CD14-positive monocyte (primary cell): ENCODE measurements at regions of chr1 and their contacts with region 1.

Region 1: GRCh38 chr1:167066333-167067122 is 23.6 kb downstream of the GPA33 start:
- DNase-seq: peak; percentile 52 to 71 (median 65)
- H3K4me3 ChIP-seq: peak overlapping the region in 1 of 3 experiments; percentile 12
- H3K4me3 Mint-ChIP-seq: peak overlapping the region; percentile 40 to 80
- H3K27ac ChIP-seq: no peak overlapping the region
- H3K27ac Mint-ChIP-seq: peak overlapping the region in 2 of 7 donors; percentile 5 to 38
- H3K4me1 ChIP-seq: peaks cover 3 to 7% of the 10 kb centered on the region in 2 donors
- H3K4me1 Mint-ChIP-seq: peaks cover 7% of the 10 kb centered on the region
- H3K27me3 ChIP-seq: no peaks in the 10 kb centered on the region
- H3K27me3 Mint-ChIP-seq: peaks cover 0 to 7% (median 3%) of the 10 kb centered on the region in 3 donors
- CTCF ChIP-seq: peak; percentile 98

Region 2: GRCh38 chr1:166895793-166896192 is 170.7 kb before region 1 on chr1:
- intact Hi-C with region 1: no loop called
- DNase-seq: no peak
- H3K4me3 ChIP-seq: no peak overlapping the region
- H3K4me3 Mint-ChIP-seq: no peak overlapping the region
- H3K27ac ChIP-seq: no peak overlapping the region
- H3K27ac Mint-ChIP-seq: no peak overlapping the region
- H3K4me1 ChIP-seq: peaks cover 0 to under 1% of the 10 kb centered on the region in 2 donors
- H3K4me1 Mint-ChIP-seq: no peaks in the 10 kb centered on the region
- H3K27me3 ChIP-seq: no peaks in the 10 kb centered on the region
- H3K27me3 Mint-ChIP-seq: peaks cover 0 to 5% (median 0%) of the 10 kb centered on the region in 3 donors
- CTCF ChIP-seq: no peak

Region 3: DNA sequence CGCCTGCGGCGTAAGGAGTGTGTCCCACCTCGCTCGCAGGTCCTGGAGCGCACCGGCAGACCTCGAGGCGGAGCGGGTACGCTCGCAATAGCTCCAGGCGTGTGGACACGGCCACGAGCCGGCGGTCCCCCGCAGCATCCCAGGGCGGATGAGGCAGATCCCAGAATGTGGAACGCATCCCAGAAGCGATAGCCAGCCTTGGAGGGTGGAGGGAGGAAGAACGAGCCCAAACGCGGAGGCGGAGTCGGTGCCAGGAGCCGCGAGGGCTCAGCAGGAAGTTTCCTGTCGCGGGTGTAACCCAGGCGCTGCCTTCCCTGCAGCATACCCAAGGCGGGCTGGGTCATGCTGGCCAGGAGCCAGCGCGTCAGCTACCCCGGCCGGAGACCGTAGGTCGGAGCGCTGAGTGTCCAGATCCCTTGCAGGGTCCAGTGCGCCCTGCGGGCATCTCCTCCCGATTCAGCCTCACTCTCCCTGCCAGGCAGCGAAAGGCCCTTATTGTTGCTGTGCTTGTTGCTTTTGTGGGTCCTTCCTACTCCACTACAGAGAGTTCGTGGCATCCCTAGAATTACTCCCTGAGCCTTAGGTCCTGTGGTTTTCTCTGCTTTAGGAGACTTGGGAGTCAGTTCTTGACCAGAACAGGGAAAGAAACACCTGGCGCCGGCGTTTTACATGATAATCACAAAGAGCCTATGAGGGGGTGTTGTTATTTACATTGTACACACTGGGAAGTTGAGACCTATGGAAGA is 55.0 kb after region 1 on chr1:
- intact Hi-C with region 1: loop called (anchors 5 kb)
- DNase-seq: peak; percentile 34 to 48 (median 40)
- H3K4me3 ChIP-seq: peak overlapping the region; percentile 15 to 77 (median 52)
- H3K4me3 Mint-ChIP-seq: peak overlapping the region; percentile 90 to 99
- H3K27ac ChIP-seq: no peak overlapping the region
- H3K27ac Mint-ChIP-seq: peak overlapping the region in 2 of 7 donors; percentile 34 to 50
- H3K4me1 ChIP-seq: peaks cover 9 to 11% of the 10 kb centered on the region in 2 donors
- H3K4me1 Mint-ChIP-seq: peaks cover 11% of the 10 kb centered on the region
- H3K27me3 ChIP-seq: no peaks in the 10 kb centered on the region
- H3K27me3 Mint-ChIP-seq: peaks cover 2 to 8% (median 5%) of the 10 kb centered on the region in 3 donors
- CTCF ChIP-seq: no peak

Region 4: GRCh38 chr1:167442124-167442848 is 375.8 kb after region 1 on chr1:
- intact Hi-C with region 1: loop called (anchors 5 to 10 kb)
- DNase-seq: peak; percentile 59 to 67 (median 62)
- H3K4me3 ChIP-seq: no peak overlapping the region
- H3K4me3 Mint-ChIP-seq: peak overlapping the region in 1 of 2 donors; percentile 16
- H3K27ac ChIP-seq: no peak overlapping the region
- H3K27ac Mint-ChIP-seq: peak overlapping the region in 3 of 7 donors; percentile 6 to 42 (median 38)
- H3K4me1 ChIP-seq: peaks cover 20 to 24% of the 10 kb centered on the region in 2 donors
- H3K4me1 Mint-ChIP-seq: peaks cover 35% of the 10 kb centered on the region
- H3K27me3 ChIP-seq: peaks cover 0 to 15% of the 10 kb centered on the region in 2 donors
- H3K27me3 Mint-ChIP-seq: peaks cover 16 to 24% (median 18%) of the 10 kb centered on the region in 3 donors
- CTCF ChIP-seq: peak; percentile 93

Region 5: DNA sequence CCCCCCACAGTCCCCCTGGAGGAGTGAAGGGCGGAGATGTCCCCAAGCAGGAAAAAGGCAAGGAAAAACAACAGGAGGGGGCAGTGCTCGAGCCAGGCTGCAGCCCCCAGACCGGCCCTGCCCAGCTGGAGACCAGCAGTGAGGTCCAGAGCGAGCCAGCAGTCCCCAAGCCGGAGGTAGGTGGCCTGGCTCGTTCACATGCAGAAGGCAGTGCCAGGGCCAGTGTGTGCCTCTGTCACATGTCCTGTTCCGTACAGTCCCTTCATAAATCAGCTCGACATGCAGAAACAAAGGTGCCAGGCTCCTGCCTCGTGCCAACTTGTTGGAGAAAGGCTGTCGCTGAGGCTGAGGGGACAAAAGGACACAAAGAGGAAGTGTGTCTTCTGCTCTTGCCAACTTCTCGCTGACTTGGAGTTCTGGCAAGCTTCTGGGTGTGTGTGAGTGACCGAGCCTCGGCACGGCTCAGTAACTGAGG is 631.2 kb after region 1 on chr1:
- intact Hi-C with region 1: loop called in 1 of 2 experiments (anchors 10 kb)
- DNase-seq: peak in 1 of 3 donors; percentile 35
- H3K4me3 ChIP-seq: no peak overlapping the region
- H3K4me3 Mint-ChIP-seq: no peak overlapping the region
- H3K27ac ChIP-seq: peak overlapping the region; percentile 43 to 65
- H3K27ac Mint-ChIP-seq: peak overlapping the region in 6 of 7 donors; percentile 73 to 88 (median 84)
- H3K4me1 ChIP-seq: peaks cover 5 to 17% of the 10 kb centered on the region in 2 donors
- H3K4me1 Mint-ChIP-seq: peaks cover 27% of the 10 kb centered on the region
- H3K27me3 ChIP-seq: no peaks in the 10 kb centered on the region
- H3K27me3 Mint-ChIP-seq: no peaks in the 10 kb centered on the region
- CTCF ChIP-seq: no peak